ENCODE measurements at regions of chr10 and their contacts with region 1.

Region 1: DNA sequence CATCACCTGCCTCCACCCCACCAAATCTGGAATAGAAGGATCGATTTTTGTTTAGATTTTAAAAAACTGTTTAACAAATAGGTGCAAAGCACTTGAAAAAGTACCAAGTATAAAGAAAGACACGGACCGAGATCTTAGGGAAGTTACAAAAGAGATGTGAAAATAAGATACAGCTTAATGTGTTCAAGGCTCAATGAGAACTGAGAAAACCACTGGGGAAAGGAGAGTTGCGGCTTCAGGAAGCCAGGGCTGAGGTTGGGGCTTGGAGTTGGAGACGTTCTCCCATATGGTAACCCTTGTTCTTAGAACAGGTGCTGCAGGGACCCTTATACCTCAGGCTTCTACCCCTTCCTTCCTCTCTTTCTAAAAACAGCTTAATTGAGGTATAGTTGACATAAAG is 140.2 kb downstream of the FANK1 start:
- DNase-seq: no peak
- ATAC-seq: no peak
- H3K4me3 ChIP-seq: no peak overlapping the region
- H3K27ac ChIP-seq: no peak overlapping the region
- H3K4me1 ChIP-seq: no peaks in the 10 kb centered on the region
- H3K27me3 ChIP-seq: no peaks in the 10 kb centered on the region

Region 2: DNA sequence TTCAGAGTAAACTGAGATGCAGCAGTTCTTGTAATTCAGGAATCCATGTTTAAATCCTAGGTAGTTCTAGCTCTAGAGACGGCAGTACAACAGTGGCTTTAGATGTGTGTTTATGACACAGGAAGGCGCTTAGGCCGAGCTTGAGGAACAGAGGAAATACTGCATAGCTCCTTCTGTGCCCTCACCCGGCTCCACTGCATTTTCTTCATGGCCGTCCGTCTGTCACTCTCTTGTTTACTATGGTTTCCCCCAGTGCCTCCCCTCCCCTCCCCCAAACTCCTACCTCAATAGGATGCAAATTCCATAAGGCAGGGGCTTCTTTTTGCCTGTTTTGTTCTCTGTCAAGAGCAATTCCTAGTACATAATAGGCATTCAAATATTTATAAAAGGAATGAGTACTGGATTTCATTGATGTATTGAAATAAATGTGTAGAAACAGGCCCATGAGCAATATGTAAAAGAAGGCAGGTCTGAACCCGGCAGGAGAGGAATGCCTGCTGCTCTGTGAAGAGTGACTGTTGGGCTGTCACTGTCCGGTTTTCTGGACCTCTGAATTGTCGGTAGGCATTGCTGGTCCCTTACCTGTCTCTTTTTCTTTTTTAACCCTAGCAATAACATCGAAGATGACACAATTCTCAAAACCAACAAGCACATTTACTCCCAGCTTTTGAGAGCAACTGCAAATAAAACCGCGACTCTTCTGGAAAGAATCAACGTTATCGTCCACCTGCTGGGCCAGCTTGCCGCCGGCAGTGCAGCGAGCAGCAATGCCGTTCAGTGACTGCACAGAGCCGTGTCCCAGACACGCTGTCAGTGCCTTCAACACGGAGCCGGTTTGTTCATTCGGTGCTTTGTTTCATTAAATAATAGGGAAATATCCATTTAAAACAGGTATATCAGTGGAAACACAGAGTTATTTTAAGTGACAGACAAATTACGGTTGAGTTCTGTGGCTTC is 273.5 kb before region 1 on chr10:
- intact Hi-C with region 1: no loop called
- DNase-seq: no peak
- ATAC-seq: no peak
- H3K4me3 ChIP-seq: no peak overlapping the region
- H3K27ac ChIP-seq: no peak overlapping the region
- H3K4me1 ChIP-seq: no peaks in the 10 kb centered on the region
- H3K27me3 ChIP-seq: no peaks in the 10 kb centered on the region

Region 3: DNA sequence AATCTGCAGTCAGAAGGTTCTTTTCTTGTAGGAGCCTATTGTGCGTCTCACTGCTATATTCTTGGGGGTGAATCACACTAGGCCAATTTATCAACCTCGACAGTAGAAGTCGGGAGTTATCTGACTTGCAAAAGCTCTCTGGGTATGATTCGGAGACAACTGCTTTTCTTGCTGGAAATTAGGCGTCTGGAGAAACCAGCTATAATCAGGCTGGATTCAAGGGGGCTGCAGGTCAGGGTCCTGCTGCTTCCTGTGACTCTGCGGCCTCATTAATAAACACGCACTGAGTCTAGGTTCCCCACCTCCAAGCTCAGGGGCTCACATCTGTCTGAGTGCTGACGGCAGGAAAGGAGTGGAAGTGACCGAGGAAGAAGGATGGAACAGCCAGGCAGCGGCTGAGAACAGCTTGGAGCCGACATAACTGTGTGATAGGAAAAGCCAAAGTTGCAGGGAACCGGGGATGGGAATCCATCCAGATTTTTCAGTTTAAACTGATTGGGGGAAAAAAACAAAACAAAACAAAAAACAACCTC is 44.4 kb after region 1 on chr10:
- intact Hi-C with region 1: loop called in 1 of 2 experiments (anchors 2 kb)
- DNase-seq: no peak
- ATAC-seq: no peak
- H3K4me3 ChIP-seq: no peak overlapping the region
- H3K27ac ChIP-seq: no peak overlapping the region
- H3K4me1 ChIP-seq: no peaks in the 10 kb centered on the region
- H3K27me3 ChIP-seq: no peaks in the 10 kb centered on the region